ENCODE measurements at regions of chr3 and their contacts with region 1.

Region 1: DNA sequence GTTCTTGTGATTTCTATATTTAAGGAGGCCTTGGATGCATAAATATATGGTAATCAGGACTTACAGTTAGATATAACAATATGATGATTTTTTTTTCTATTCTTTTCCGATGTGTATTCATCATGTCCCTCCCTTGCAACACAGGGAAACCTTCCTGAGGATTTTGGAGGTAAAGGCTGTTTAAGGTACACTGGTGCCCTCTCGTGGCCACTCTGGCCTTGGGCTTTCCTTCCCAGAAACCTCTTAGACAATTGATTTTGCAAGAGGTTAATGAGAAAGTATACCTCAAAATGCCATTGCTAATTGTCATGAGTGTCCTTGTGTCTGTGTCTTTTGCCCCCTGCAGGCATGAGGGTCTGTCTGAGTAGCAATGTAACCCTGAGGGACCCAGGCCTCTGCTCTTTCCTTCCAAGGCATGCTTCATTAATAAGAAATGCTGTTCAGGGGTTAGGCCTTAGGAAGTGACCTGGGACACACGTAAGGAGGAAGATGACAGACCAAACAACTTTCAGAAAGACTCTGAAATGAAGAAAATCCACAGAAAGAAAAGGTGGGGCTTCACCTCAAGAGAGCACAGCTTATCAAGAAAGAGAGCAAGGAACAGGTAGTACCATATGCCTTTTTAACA is 70.3 kb upstream of the PPP2R3A start:
- DNase-seq: peak; percentile 72 to 88 (median 79)
- H3K4me3 ChIP-seq: no peak overlapping the region
- H3K27ac ChIP-seq: no peak overlapping the region
- H3K4me1 ChIP-seq: no peaks in the 10 kb centered on the region
- H3K27me3 ChIP-seq: no peaks in the 10 kb centered on the region
- CTCF ChIP-seq: peak; percentile 78

Region 2: GRCh38 chr3:134597390-134597970 is 1297.7 kb before region 1 on chr3:
- intact Hi-C with region 1: loop called (anchors 5 kb)
- DNase-seq: no peak
- H3K4me3 ChIP-seq: no peak overlapping the region
- H3K27ac ChIP-seq: no peak overlapping the region
- H3K4me1 ChIP-seq: no peaks in the 10 kb centered on the region
- H3K27me3 ChIP-seq: no peaks in the 10 kb centered on the region
- CTCF ChIP-seq: no peak

Region 3: GRCh38 chr3:134794950-134795745 is 1100.1 kb before region 1 on chr3 and contains the start of gene EPHB1:
- intact Hi-C with region 1: loop called (anchors 5 kb)
- DNase-seq: peak; percentile 95 to 98 (median 97)
- H3K4me3 ChIP-seq: peak within 1 kb of the TSS; percentile 62 to 67 (median 67)
- H3K27ac ChIP-seq: no peak within 1 kb of the TSS
- H3K4me1 ChIP-seq: peaks cover 0 to 5% (median 0%) of the 10 kb centered on the region in 3 donors
- H3K27me3 ChIP-seq: peaks cover 2% of the 10 kb centered on the region
- CTCF ChIP-seq: peak; percentile 75
- total RNA-seq, gene EPHB1: 3.2 TPM

Region 4: GRCh38 chr3:135456108-135456790 is 439.0 kb before region 1 on chr3:
- intact Hi-C with region 1: no loop called
- DNase-seq: peak in 4 of 5 donors; percentile 85 to 89 (median 88)
- H3K4me3 ChIP-seq: no peak overlapping the region
- H3K27ac ChIP-seq: no peak overlapping the region
- H3K4me1 ChIP-seq: no peaks in the 10 kb centered on the region
- H3K27me3 ChIP-seq: no peaks in the 10 kb centered on the region
- CTCF ChIP-seq: no peak

Measured in kidney (tissue), 22 donors.